Activated T-helper 2 cell treated with anti-CD3 and anti-CD28 coated beads, Interferon-gamma antibody, Interleukin-2, Interleukin-4, amounts not matched to agents 10 μg/mL and 5 μg/mL and 100 μg/mL, durations not matched to agents 14 hours and 24 hours and 36 hours (primary cell): ENCODE measurements at regions of chr3 and their contacts with region 1.

Region 1: DNA sequence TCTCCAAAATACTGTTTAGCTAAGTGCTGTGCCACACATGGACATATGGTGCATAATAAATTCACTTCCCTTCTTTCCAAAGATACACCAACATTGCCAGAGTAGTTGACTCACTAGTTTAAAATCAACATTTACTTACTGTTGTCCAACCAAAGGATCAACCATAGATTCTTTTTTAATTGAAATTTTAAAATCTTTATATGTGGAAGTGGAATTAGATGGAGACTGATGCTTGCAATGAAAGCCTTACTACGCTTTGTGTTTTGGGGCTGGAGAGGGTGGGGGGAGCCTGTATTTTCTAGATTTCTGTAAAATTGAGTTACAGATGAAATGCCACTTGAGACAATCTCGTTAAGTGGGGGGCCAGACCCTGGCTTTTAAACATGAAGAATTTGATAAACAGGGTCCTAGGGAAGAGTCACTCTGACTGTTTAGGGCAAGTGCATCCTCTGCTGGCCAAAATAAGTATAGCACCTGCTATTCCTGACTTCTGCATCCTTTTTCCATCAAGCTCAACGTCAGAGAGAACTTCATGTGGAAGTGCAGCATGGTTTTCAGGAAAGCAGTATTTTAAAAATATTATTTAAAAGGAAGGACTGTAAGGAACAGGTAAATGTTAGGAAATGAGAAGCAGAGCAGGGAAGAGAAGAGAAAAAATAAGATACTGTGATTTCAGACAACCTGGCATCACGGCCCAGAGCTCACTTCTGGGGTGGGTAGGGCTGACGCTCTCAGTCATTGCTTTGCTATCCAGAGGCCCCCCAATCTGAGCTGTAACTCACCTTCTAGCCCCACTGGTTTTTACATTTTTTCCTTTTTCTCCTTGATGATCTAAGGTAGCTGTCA is 76.7 kb downstream of the BOC start:
- DNase-seq: no peak
- H3K4me3 Mint-ChIP-seq: no peak overlapping the region
- H3K27ac Mint-ChIP-seq: no peak overlapping the region
- H3K4me1 Mint-ChIP-seq: peaks cover 6% of the 10 kb centered on the region
- H3K27me3 Mint-ChIP-seq: no peaks in the 10 kb centered on the region

Region 2: DNA sequence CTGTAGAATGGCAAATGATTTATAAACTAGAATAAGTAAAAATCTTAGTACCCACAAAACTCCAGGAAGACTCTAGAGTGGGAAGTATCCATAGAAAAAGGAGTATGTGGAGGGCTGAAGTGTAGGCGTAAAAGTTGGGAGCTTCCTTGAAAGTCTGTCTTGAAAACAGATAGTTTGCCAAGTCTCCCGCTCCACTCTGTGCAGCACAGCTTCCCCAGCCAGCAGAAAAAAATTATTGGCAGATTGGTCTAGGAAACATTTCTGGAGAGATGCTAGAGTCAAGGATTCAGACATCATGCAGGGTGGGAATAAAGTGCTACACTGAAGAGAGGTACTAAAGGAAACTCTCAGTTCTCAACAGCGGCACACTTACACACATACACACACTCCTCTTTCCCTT is 387.9 kb before region 1 on chr3:
- intact Hi-C with region 1: no loop called
- DNase-seq: no peak
- H3K4me3 Mint-ChIP-seq: no peak overlapping the region
- H3K27ac Mint-ChIP-seq: no peak overlapping the region
- H3K4me1 Mint-ChIP-seq: no peaks in the 10 kb centered on the region
- H3K27me3 Mint-ChIP-seq: peaks cover 3% of the 10 kb centered on the region

Region 3: DNA sequence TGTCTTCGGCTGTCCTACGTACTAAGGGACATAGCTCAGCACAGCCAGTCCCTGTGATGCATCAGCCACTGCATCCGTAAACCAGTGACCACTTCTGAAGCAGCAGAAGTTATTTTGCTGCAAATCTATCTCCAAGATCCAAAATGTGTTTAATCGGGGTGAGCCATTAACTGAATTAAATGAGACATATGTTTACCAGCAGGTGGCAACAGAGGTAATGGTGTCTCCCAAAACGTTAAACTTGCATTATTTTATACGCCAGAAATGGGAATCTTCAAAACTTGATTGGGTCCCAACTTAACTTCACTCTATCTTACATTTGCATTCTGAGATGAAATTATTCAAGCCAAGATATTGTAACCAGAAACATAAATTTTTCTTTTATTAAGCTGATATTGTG is 152.0 kb before region 1 on chr3:
- intact Hi-C with region 1: loop called (anchors 2 kb)
- DNase-seq: no peak
- H3K4me3 Mint-ChIP-seq: no peak overlapping the region
- H3K27ac Mint-ChIP-seq: no peak overlapping the region
- H3K4me1 Mint-ChIP-seq: peaks cover 5% of the 10 kb centered on the region
- H3K27me3 Mint-ChIP-seq: no peaks in the 10 kb centered on the region

Region 4: GRCh38 chr3:113339616-113340244 is 51.7 kb after region 1 on chr3:
- intact Hi-C with region 1: no loop called
- DNase-seq: no peak
- H3K4me3 Mint-ChIP-seq: no peak overlapping the region
- H3K27ac Mint-ChIP-seq: no peak overlapping the region
- H3K4me1 Mint-ChIP-seq: no peaks in the 10 kb centered on the region
- H3K27me3 Mint-ChIP-seq: no peaks in the 10 kb centered on the region

Region 5: DNA sequence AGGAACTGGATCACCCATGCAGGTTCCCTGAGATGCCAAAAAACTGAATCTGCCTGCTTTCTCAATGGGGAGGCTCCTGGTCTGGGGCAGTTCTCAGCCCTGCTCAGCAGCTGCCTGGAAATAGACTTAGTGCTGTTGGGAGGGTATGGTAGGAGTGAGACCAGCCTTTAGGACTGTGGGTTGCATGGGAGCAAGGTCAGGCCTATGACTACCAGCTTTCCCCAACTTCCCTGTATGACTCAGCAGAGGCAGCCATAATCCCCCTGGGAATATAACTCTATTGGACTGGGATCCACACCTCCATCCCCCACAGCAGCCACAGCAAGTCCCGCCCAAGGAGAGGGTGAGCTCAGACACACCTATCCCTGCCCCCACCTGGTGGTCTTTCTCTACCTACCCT is 66.3 kb after region 1 on chr3:
- intact Hi-C with region 1: no loop called
- DNase-seq: no peak
- H3K4me3 Mint-ChIP-seq: no peak overlapping the region
- H3K27ac Mint-ChIP-seq: no peak overlapping the region
- H3K4me1 Mint-ChIP-seq: no peaks in the 10 kb centered on the region
- H3K27me3 Mint-ChIP-seq: no peaks in the 10 kb centered on the region